ENCODE measurements at regions of chr10 and their contacts with region 1.

Region 1: DNA sequence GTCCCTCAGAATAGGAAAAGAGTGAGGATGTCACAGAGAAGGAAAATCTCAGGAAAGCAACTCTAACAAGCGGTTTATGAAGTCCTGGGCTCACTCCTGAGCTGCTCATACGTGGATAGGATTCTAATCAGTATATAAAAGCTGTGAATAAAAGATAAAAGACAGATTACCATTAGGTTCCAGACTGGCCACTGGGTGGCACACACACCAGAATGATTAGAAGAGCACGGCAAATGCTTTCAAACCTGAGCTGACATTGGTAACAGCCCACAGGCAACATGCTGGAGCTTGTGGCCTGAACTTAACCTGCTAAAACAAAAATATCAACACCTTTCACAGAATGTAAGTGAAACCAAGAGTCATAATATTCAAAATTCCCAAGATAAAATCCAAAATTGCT is 370.8 kb downstream of the GRID1 start:
- DNase-seq: peak; percentile 18
- ATAC-seq: peak; percentile 75
- H3K4me3 ChIP-seq: no peak overlapping the region
- H3K27ac ChIP-seq: no peak overlapping the region
- H3K4me1 ChIP-seq: no peaks in the 10 kb centered on the region
- H3K27me3 ChIP-seq: no peaks in the 10 kb centered on the region
- CTCF ChIP-seq: peak; percentile 14; the same call in 1 of the 2 replicates
- EP300 ChIP-seq: no peak
- POLR2A ChIP-seq: no peak
- RAD21 ChIP-seq: no peak

Region 2: GRCh38 chr10:86139066-86139657 is 143.4 kb after region 1 on chr10:
- CTCF ChIA-PET with region 1: no interaction called
- POLR2A ChIA-PET with region 1: no interaction called
- in situ Hi-C with region 1: no loop called
- intact Hi-C with region 1: loop called (anchors 2 kb)
- DNase-seq: peak; percentile 16
- ATAC-seq: peak; percentile 85
- H3K4me3 ChIP-seq: no peak overlapping the region
- H3K27ac ChIP-seq: no peak overlapping the region
- H3K4me1 ChIP-seq: no peaks in the 10 kb centered on the region
- H3K27me3 ChIP-seq: peaks cover 0 to 2% of the 10 kb centered on the region in 2 experiments; a peak in 2 of 5 replicates
- CTCF ChIP-seq: peak; percentile 67
- EP300 ChIP-seq: no peak
- POLR2A ChIP-seq: no peak
- RAD21 ChIP-seq: no peak

Measured in HepG2 (cell line).